ENCODE measurements at regions of chr7 and their contacts with region 1.

Region 1: GRCh38 chr7:141960687-141961422 is 12.7 kb downstream of the TAS2R38 start:
- DNase-seq: no peak
- H3K4me3 ChIP-seq: no peak overlapping the region
- H3K4me3 Mint-ChIP-seq: no peak overlapping the region
- H3K27ac ChIP-seq: no peak overlapping the region
- H3K27ac Mint-ChIP-seq: no peak overlapping the region
- H3K4me1 ChIP-seq: no peaks in the 10 kb centered on the region
- H3K4me1 Mint-ChIP-seq: no peaks in the 10 kb centered on the region
- H3K27me3 ChIP-seq: no peaks in the 10 kb centered on the region
- H3K27me3 Mint-ChIP-seq: peaks cover under 1 to 7% of the 10 kb centered on the region in 2 donors

Region 2: GRCh38 chr7:141943846-141944245 is 17.0 kb before region 1 on chr7:
- CTCF ChIA-PET with region 1: no interaction called
- POLR2A ChIA-PET with region 1: no interaction called
- DNase-seq: no peak
- H3K4me3 ChIP-seq: no peak overlapping the region
- H3K4me3 Mint-ChIP-seq: no peak overlapping the region
- H3K27ac ChIP-seq: no peak overlapping the region
- H3K27ac Mint-ChIP-seq: no peak overlapping the region
- H3K4me1 ChIP-seq: no peaks in the 10 kb centered on the region
- H3K4me1 Mint-ChIP-seq: no peaks in the 10 kb centered on the region
- H3K27me3 ChIP-seq: no peaks in the 10 kb centered on the region
- H3K27me3 Mint-ChIP-seq: no peaks in the 10 kb centered on the region

Region 3: DNA sequence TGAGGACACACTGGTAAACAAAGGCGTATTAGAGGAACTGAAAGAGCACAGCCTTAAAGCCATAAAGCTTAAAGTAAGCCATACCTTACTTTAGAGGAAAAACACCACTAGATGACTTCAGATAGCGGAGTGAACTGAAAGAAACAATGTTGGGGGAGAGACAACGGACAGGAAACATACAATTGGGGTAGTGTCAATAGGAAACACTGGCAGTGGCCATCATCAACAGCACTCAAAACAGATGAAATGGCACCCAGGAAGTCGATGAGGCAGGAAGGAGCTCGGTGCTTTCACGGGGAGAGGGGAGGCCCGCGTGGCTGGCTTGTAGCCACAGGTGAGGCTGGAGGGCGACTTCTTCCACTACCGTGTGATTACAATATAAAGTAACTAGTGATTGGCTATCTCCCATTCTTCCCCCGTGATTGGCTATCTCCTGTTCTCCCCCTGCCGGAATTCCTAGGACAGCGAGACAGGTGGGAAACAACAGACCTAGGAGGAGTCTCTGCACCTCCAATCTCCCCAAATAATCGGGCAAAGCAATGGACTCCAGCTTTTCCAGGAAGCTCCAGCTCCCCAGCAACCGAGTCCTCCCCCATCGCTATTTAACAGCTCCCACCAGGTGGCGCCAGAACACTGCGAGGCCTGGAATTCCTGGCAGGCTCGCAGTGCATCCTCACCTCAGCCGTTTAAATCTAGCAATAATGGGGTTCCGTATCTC is 15.1 kb after region 1 on chr7:
- CTCF ChIA-PET with region 1: interaction called, 13 read pairs
- POLR2A ChIA-PET with region 1: no interaction called
- DNase-seq: peak; percentile 26 to 57 (median 43)
- H3K4me3 ChIP-seq: peak overlapping the region; percentile 65
- H3K4me3 Mint-ChIP-seq: peak overlapping the region; percentile 46 to 79 (median 77)
- H3K27ac ChIP-seq: no peak overlapping the region
- H3K27ac Mint-ChIP-seq: peak overlapping the region in 4 of 8 donors; percentile 1 to 64 (median 43)
- H3K4me1 ChIP-seq: peaks cover 4% of the 10 kb centered on the region
- H3K4me1 Mint-ChIP-seq: peaks cover 11 to 18% (median 14%) of the 10 kb centered on the region in 3 donors
- H3K27me3 ChIP-seq: no peaks in the 10 kb centered on the region
- H3K27me3 Mint-ChIP-seq: no peaks in the 10 kb centered on the region

Region 4: GRCh38 chr7:142001163-142001874 is 40.5 kb after region 1 on chr7:
- CTCF ChIA-PET with region 1: no interaction called
- POLR2A ChIA-PET with region 1: no interaction called
- DNase-seq: no peak
- H3K4me3 ChIP-seq: no peak overlapping the region
- H3K4me3 Mint-ChIP-seq: no peak overlapping the region
- H3K27ac ChIP-seq: no peak overlapping the region
- H3K27ac Mint-ChIP-seq: no peak overlapping the region
- H3K4me1 ChIP-seq: no peaks in the 10 kb centered on the region
- H3K4me1 Mint-ChIP-seq: no peaks in the 10 kb centered on the region
- H3K27me3 ChIP-seq: no peaks in the 10 kb centered on the region
- H3K27me3 Mint-ChIP-seq: peaks cover 4 to 13% of the 10 kb centered on the region in 2 donors